Prostate gland (tissue), 2 donors: ENCODE measurements at regions of chr6 and their contacts with region 1.

Region 1: GRCh38 chr6:135938576-135939207 is 87.2 kb downstream of the PDE7B start:
- DNase-seq: no peak
- H3K4me3 ChIP-seq: no peak overlapping the region
- H3K27ac ChIP-seq: peak overlapping the region; percentile 20 to 51
- H3K4me1 ChIP-seq: peaks cover 8% of the 10 kb centered on the region
- H3K27me3 ChIP-seq: no peaks in the 10 kb centered on the region
- CTCF ChIP-seq: peak in 2 of 4 experiments; percentile 11 to 33
- POLR2A ChIP-seq: no peak

Region 2: DNA sequence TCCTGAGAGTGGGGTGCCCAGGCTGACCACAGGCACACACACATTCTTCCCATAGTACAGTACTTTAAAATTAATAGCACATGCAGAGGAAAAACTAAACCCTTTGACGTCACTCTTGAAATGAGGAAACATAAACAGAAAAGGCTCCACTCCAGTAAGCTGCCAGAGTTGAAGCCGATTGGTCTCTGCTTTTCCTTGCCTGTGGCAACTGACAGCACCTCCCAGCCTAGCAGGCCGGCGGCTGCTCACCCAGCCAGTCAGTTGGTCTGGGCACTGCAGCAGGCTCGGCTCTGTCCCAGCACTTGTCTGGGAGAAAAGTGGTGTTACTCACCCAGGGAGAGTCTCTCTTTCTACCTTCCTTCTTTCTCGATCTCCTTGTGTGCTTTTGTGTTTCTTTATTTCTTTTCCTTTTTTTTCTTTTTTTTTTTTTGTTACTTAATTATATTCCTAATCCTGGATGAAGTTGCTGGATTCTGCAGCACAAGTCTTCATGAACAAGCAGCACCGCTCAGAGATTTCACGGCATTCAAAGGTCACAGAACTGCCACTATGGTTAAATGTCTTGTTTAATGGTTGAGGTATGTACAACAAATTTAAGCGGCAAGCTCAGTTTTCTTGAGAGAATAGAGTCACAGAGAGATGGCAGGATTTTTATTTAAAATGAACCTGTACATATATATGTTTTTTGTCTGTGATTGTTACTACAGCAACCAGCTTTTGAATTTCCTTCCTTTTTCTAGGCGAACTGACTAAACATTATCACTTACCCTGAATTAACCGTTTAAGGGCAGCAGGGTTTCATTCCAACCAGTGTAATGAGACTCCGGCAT is 87.0 kb before region 1 on chr6 and contains the start of gene PDE7B:
- intact Hi-C with region 1: loop called (anchors 5 kb)
- DNase-seq: peak; percentile 44
- H3K4me3 ChIP-seq: peak within 1 kb of the TSS; percentile 9 to 16
- H3K27ac ChIP-seq: peak within 1 kb of the TSS; percentile 4 to 28
- H3K4me1 ChIP-seq: no peaks in the 10 kb centered on the region
- H3K27me3 ChIP-seq: no peaks in the 10 kb centered on the region
- CTCF ChIP-seq: no peak
- POLR2A ChIP-seq: peak; percentile 48
- total RNA-seq, gene PDE7B: 4.7 to 6.3 TPM

Region 3: GRCh38 chr6:136158387-136158821 is 219.7 kb after region 1 on chr6:
- intact Hi-C with region 1: loop called (anchors 5 kb)
- DNase-seq: no peak
- H3K4me3 ChIP-seq: no peak overlapping the region
- H3K27ac ChIP-seq: no peak overlapping the region
- H3K4me1 ChIP-seq: no peaks in the 10 kb centered on the region
- H3K27me3 ChIP-seq: no peaks in the 10 kb centered on the region
- CTCF ChIP-seq: no peak
- POLR2A ChIP-seq: no peak